ENCODE measurements at regions of chr14 and their contacts with region 1.

Region 1: DNA sequence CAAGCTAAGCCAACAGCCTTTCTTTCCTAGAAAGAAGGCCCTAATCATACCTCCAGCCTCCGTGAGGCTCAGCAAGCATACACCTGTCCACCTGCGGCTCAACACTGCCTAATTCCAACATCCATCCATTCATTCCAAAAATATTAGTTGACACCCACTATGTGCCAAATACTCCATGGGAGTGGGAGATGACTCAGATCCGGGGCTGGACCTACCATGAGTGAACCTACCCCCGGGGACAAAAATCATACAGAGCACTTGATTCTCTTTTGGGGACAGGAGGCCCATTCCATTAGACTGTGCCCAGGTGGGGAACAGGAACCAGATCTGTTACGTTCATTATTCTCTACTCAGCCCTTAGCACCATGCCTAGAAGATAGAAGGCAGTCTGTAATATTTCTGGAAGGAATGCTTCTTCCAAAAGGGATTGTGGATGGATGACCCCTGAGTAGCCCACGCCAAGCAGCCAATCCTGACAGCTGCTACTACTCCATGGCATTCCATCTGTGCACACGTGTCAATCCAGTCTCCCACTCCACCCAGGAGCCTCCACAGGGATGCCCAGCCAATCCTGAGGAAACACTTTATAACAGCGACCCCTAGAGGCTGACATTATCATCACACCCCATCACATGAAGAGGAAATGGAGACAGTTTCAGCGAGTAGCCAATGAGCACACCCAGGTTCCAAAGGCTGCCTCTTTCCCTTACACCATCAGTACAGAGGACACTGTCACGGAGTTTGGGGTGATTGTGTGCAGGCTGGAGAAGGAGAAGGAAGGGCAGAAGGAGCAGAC is 170.7 kb downstream of the ESRRB start:
- DNase-seq: peak; percentile 61
- H3K4me3 ChIP-seq: no peak overlapping the region
- H3K27ac ChIP-seq: no peak overlapping the region
- H3K4me1 ChIP-seq: peaks cover 30% of the 10 kb centered on the region
- H3K27me3 ChIP-seq: no peaks in the 10 kb centered on the region
- CTCF ChIP-seq: peak; percentile 65 to 77

Region 2: DNA sequence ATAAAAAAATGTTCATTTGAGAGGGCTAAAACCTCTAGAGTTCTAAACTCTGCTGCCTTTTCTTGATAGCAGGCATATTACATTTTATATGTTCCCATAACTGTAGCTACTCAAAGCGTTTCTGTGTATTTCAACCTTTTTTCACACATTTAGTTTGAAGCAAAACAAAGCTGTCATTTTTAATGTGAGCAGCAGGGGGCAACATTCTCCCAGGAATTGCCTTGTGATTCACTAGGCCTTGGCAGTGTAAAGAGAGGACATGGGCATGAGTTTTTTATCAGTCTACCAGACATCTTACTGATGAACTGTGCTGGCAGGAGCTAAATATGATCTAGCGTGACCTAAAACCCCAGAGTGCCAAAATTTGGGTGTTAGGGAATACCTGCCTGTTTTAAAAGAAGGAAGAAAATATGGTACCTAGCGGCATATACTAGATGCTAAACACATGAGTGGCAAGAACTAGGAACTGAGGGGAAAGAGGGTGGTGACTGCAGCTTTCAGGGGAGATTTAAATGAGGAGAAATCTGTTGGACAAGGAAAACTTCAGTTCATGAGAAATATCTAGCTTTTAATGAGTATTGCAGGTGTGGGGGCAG is 495.7 kb before region 1 on chr14:
- CTCF ChIA-PET with region 1: no interaction called
- dilution Hi-C with region 1: no loop called
- in situ Hi-C with region 1: no loop called
- intact Hi-C with region 1: loop called (anchors 2 kb)
- DNase-seq: peak; percentile 33
- H3K4me3 ChIP-seq: no peak overlapping the region
- H3K27ac ChIP-seq: no peak overlapping the region
- H3K4me1 ChIP-seq: no peaks in the 10 kb centered on the region
- H3K27me3 ChIP-seq: no peaks in the 10 kb centered on the region
- CTCF ChIP-seq: peak; percentile 61 to 72

Region 3: DNA sequence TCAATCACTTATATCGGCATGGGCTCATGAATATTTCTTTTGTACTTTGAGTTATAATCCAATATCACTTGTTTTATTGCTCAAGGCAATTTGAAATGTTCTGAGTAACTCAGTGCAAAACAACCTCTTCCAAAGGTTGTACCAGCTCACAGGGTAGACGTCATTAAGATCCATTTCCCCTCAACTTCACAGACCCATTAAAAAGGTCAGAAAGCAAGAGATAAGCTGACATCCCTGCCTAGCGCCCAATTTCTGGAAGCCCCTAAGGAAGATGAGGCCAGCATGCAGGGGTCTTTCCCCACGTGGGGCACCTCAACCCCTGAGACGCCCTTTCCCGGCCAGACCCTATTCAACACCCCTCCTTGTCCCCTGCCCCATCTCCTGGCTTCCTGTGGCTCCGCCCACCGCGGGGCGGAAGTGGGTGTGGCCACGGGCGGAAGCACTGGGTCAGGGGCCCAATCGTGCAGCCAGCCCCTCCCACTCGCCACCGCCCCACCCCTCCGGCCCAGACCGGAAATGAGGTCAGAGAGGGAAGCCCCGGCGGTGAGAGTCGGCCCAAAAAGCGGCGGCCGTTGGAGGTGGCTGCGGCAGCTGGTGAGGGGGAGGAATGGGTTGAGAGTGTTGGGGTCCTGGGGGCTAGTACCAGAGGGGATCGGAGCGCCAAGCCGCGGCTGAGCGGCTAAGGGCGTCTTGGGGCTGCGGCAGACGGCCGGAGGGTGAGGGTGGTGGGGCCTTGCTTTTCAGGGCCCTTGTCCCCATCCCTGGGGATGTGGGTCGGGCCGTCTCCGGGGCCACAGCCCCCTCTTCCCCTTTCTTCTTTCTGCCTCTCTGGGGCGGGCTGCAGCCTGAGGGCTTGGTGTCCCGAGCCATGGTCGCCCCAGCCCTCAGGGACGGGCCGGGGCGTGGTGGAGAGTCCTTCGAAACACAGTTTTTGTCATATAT is 395.0 kb before region 1 on chr14 and contains the start of gene GPATCH2L:
- CTCF ChIA-PET with region 1: no interaction called
- dilution Hi-C with region 1: no loop called
- in situ Hi-C with region 1: no loop called
- intact Hi-C with region 1: loop called (anchors 1 kb)
- DNase-seq: peak; percentile 88
- H3K4me3 ChIP-seq: peak within 1 kb of the TSS; percentile 80 to 84 (median 82)
- H3K27ac ChIP-seq: peak within 1 kb of the TSS; percentile 86
- H3K4me1 ChIP-seq: peaks cover 28% of the 10 kb centered on the region
- H3K27me3 ChIP-seq: no peaks in the 10 kb centered on the region
- CTCF ChIP-seq: no peak
- total RNA-seq, gene GPATCH2L: 65.1 to 69.5 TPM

Region 4: DNA sequence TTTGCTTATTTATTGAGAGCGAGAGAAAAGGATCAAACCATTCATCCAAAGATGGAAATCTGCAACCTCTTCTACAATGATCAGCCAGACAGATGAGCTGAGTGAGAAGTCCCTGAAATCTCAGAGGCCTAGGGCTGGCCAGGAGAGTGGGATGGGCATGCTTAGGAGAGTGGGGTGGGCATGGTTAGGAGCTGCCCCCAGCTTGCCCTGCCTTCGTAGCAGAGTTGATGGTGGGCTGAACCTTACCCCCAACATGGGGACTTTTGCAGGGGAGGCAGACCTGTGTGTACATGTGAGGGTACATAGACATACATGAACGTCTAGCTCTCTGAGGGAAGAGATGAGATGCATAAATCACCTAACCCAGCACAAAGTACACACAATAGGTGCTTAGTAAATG is 266.4 kb before region 1 on chr14:
- CTCF ChIA-PET with region 1: no interaction called
- dilution Hi-C with region 1: no loop called
- in situ Hi-C with region 1: no loop called
- intact Hi-C with region 1: no loop called
- DNase-seq: no peak
- H3K4me3 ChIP-seq: no peak overlapping the region
- H3K27ac ChIP-seq: no peak overlapping the region
- H3K4me1 ChIP-seq: no peaks in the 10 kb centered on the region
- H3K27me3 ChIP-seq: no peaks in the 10 kb centered on the region
- CTCF ChIP-seq: no peak

Region 5: DNA sequence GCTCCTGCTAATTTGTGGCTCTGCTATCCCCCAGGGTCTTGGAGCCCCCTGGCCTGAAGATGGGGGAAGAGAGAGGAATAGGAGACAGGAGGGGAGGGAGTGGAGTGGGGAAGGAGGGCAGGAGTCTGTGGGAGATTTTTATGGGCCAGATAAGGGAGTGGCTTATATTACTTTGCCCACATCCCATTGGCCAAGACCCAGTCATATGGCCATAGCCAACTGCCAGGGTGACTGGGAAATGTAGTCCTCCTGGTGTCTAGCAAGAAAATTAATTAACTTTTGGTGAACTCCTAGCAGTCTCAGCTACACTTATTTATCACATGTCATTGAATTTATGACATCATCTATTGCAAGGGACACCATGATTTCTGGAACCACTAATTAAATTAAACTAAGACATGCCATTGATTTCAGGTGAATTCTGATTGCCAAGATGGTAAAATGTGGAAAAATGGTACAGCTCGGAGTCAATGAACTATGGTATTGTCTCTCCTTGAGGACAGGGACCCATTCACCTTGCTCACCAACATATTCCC is 120.4 kb before region 1 on chr14:
- CTCF ChIA-PET with region 1: no interaction called
- dilution Hi-C with region 1: no loop called
- in situ Hi-C with region 1: no loop called
- intact Hi-C with region 1: no loop called
- DNase-seq: no peak
- H3K4me3 ChIP-seq: no peak overlapping the region
- H3K27ac ChIP-seq: no peak overlapping the region
- H3K4me1 ChIP-seq: no peaks in the 10 kb centered on the region
- H3K27me3 ChIP-seq: no peaks in the 10 kb centered on the region
- CTCF ChIP-seq: no peak

Region 6: DNA sequence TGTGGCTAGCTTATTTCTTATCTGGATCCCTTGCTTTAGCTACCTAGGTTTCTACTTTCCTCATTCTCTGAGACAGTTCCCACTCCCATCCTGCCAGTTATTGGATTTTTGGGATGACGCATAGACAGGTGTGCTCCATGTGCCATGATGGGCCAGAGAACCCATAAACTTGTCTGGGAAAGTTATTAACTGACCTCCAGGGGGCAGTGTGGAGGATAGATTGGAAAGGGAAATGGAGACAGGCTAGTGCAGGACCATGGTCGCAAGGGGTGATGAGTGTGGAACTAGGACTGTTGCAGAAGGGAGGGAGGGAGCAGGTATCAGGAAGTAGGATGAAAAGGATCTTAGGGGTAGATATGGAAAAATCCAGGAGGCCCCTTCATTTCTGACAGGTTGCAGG is 90.4 kb before region 1 on chr14:
- CTCF ChIA-PET with region 1: no interaction called
- dilution Hi-C with region 1: no loop called
- in situ Hi-C with region 1: no loop called
- intact Hi-C with region 1: loop called (anchors 1 kb)
- DNase-seq: peak; percentile 24
- H3K4me3 ChIP-seq: no peak overlapping the region
- H3K27ac ChIP-seq: no peak overlapping the region
- H3K4me1 ChIP-seq: no peaks in the 10 kb centered on the region
- H3K27me3 ChIP-seq: no peaks in the 10 kb centered on the region
- CTCF ChIP-seq: peak; percentile 55 to 61

Region 7: GRCh38 chr14:76514613-76515012 is 32.0 kb before region 1 on chr14:
- CTCF ChIA-PET with region 1: no interaction called
- dilution Hi-C with region 1: no loop called
- in situ Hi-C with region 1: no loop called
- intact Hi-C with region 1: loop called (anchors 1 kb)
- DNase-seq: peak; percentile 46
- H3K4me3 ChIP-seq: no peak overlapping the region
- H3K27ac ChIP-seq: no peak overlapping the region
- H3K4me1 ChIP-seq: peaks cover 11% of the 10 kb centered on the region
- H3K27me3 ChIP-seq: no peaks in the 10 kb centered on the region
- CTCF ChIP-seq: peak; percentile 62 to 74

Region 8: GRCh38 chr14:76687611-76688382 is 141.2 kb after region 1 on chr14:
- CTCF ChIA-PET with region 1: no interaction called
- dilution Hi-C with region 1: no loop called
- in situ Hi-C with region 1: no loop called
- intact Hi-C with region 1: no loop called
- DNase-seq: peak; percentile 50
- H3K4me3 ChIP-seq: no peak overlapping the region
- H3K27ac ChIP-seq: no peak overlapping the region
- H3K4me1 ChIP-seq: no peaks in the 10 kb centered on the region
- H3K27me3 ChIP-seq: no peaks in the 10 kb centered on the region
- CTCF ChIP-seq: no peak

Measured in mammary epithelial cell (primary cell).